ENCODE measurements at regions of chr11 and their contacts with region 1.

Region 1: GRCh38 chr11:133491680-133492383 is 40.5 kb downstream of the OPCML start:
- DNase-seq: no peak
- H3K4me3 ChIP-seq: no peak overlapping the region
- H3K27ac ChIP-seq: no peak overlapping the region
- H3K4me1 ChIP-seq: no peaks in the 10 kb centered on the region
- H3K27me3 ChIP-seq: no peaks in the 10 kb centered on the region
- CTCF ChIP-seq: no peak
- POLR2A ChIP-seq: no peak

Region 2: DNA sequence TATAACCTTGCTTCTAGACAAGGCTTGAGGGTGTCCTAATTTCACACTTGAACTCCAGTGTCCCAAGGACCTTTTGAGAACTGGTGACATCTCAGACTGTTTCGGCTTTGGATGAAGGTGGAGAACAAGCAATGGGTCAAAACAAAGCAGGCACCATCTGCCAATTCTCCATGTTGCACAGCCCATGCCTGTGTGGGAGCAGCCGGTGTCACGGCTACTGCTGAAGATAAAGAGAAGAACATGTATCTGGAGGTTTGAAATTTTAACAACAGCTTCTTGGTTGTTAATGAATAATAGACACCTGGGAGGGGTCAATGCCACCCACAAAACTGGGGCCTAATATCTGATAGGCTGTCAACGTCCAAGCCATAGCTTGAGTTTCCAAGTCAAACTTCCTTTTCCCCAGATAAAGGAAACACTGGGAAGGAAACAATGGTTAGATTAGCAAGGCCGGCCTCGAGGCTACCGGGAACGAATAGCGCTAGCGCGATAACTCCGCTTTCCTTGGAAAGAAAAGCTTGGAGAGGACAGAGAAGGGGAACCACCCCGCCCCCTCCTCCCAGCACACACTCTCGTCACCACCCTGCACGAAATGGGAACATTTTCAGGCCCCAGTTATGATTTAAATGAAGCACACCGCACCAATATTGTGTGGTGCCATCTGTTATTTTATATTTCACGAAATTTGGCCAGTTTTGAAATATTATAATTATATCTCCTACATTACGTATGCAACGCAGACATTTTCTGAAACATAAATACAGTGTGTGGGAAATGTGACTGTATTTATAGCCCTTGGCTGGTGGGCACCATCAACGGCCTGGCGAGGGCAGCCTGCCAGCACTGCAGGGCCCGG is 62.3 kb after region 1 on chr11:
- intact Hi-C with region 1: loop called in 1 of 2 experiments (anchors 10 kb)
- DNase-seq: no peak
- H3K4me3 ChIP-seq: no peak overlapping the region
- H3K27ac ChIP-seq: no peak overlapping the region
- H3K4me1 ChIP-seq: no peaks in the 10 kb centered on the region
- H3K27me3 ChIP-seq: no peaks in the 10 kb centered on the region
- CTCF ChIP-seq: no peak
- POLR2A ChIP-seq: no peak